Activated T-helper 1 cell treated with anti-CD3 and anti-CD28 coated beads, Interleukin-12 subunit alpha, Interleukin-12 subunit beta, Interleukin-2, Interleukin-4 antibody, amounts not matched to agents 30 ng/mL and 10 ng/mL and 1 ng/mL, durations not matched to agents 14 hours and 24 hours and 36 hours (primary cell): ENCODE measurements at regions of chr15 and their contacts with region 1.

Region 1: DNA sequence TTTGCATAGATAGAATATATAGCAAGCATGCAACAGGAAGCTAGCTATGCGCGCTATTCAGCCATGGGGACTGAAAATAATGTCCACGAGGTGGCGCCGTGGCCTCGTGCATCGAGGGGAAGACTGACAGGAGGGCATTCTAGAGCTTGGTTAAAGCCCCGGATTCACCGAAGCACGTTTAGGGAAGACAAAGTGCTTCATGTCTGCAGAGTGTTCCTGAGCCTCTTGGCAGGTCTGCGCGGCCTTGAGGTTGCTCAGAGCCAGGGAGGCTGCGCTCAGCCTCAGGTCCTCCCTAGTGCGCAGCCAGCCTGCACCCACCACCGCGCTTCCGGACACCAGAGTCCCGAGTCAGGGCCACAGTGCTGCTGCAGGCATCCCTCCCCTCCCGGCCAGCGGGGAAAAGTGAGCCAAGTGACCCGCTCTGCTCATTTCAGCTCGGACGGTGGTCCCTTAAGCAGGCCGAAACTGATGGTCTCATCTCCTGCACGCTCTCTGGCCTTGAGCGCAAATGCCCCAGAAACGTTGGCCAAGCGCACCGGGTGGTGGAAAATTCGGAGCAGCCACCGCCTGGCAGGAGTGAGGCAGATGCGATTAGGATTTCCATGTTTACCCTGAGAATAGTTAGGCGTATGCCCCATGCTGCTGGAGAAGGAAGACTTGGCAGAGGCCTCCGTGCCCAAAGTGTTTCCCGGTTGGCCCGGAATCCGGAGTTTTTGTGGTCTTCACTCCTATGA is 24.8 kb downstream of the GABRA5 start:
- DNase-seq: no peak
- H3K4me3 Mint-ChIP-seq: no peak overlapping the region
- H3K27ac Mint-ChIP-seq: no peak overlapping the region
- H3K4me1 Mint-ChIP-seq: no peaks in the 10 kb centered on the region
- H3K27me3 Mint-ChIP-seq: no peaks in the 10 kb centered on the region

Region 2: GRCh38 chr15:26771578-26772153 is 119.9 kb before region 1 on chr15:
- intact Hi-C with region 1: no loop called
- DNase-seq: no peak
- H3K4me3 Mint-ChIP-seq: no peak overlapping the region
- H3K27ac Mint-ChIP-seq: no peak overlapping the region
- H3K4me1 Mint-ChIP-seq: no peaks in the 10 kb centered on the region
- H3K27me3 Mint-ChIP-seq: peaks cover 20% of the 10 kb centered on the region

Region 3: GRCh38 chr15:26831951-26832350 is 59.7 kb before region 1 on chr15:
- intact Hi-C with region 1: no loop called
- DNase-seq: no peak
- H3K4me3 Mint-ChIP-seq: no peak overlapping the region
- H3K27ac Mint-ChIP-seq: no peak overlapping the region
- H3K4me1 Mint-ChIP-seq: no peaks in the 10 kb centered on the region
- H3K27me3 Mint-ChIP-seq: no peaks in the 10 kb centered on the region

Region 4: DNA sequence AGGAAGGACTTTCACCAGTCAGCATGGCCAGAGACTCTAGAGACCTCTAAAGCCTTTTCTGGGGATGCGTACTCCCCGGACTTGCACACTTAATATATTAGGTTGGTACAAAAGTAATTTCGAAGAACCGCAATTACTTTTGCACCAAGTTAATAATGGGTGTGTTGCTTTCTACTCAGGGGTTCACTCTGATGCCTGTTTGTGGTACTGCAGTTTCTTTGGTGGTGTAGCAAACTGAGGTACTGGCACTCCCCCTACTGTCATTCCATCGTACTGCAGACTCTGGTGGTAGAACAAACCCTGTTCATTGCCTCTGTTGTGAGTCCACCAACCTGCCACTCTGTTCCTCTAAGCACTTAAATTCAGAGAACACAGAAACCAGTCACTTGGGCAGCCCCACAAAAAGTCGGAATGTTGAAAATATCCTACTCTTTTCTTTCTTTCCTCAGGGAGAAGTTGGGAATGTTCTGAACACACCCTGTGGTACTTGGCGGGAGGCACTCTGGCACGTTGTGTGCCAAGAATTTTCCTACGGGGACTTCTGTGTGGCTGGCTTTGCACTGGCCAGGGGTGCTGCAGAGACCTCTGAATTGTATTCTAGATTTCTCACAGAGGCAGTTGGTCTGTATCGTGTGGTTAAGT is 125.7 kb after region 1 on chr15:
- intact Hi-C with region 1: loop called (anchors 1 kb)
- DNase-seq: peak; percentile 8
- H3K4me3 Mint-ChIP-seq: no peak overlapping the region
- H3K27ac Mint-ChIP-seq: no peak overlapping the region
- H3K4me1 Mint-ChIP-seq: no peaks in the 10 kb centered on the region
- H3K27me3 Mint-ChIP-seq: no peaks in the 10 kb centered on the region

Region 5: GRCh38 chr15:27358751-27359434 is 467.3 kb after region 1 on chr15:
- intact Hi-C with region 1: loop called (anchors 5 kb)
- DNase-seq: no peak
- H3K4me3 Mint-ChIP-seq: no peak overlapping the region
- H3K27ac Mint-ChIP-seq: no peak overlapping the region
- H3K4me1 Mint-ChIP-seq: no peaks in the 10 kb centered on the region
- H3K27me3 Mint-ChIP-seq: no peaks in the 10 kb centered on the region